ENCODE measurements at regions of chr14 and their contacts with region 1.

Region 1: GRCh38 chr14:63388763-63389431 is 70.2 kb upstream of the GPHB5 start:
- DNase-seq: peak; percentile 64
- H3K4me3 ChIP-seq: no peak overlapping the region; a peak in 1 of 4 replicates
- H3K27ac ChIP-seq: no peak overlapping the region
- H3K4me1 ChIP-seq: no peaks in the 10 kb centered on the region
- H3K27me3 ChIP-seq: no peaks in the 10 kb centered on the region
- CTCF ChIP-seq: peak; percentile 92
- EP300 ChIP-seq: no peak
- RAD21 ChIP-seq: peak; percentile 94

Region 2: GRCh38 chr14:63134801-63135200 is 254.1 kb before region 1 on chr14:
- CTCF ChIA-PET with region 1: no interaction called
- POLR2A ChIA-PET with region 1: no interaction called
- DNase-seq: peak; percentile 30
- H3K4me3 ChIP-seq: no peak overlapping the region; a peak in 1 of 4 replicates
- H3K27ac ChIP-seq: no peak overlapping the region
- H3K4me1 ChIP-seq: no peaks in the 10 kb centered on the region
- H3K27me3 ChIP-seq: no peaks in the 10 kb centered on the region; the same call in 1 of the 2 replicates
- CTCF ChIP-seq: peak; percentile 46
- EP300 ChIP-seq: no peak
- RAD21 ChIP-seq: peak; percentile 51

Region 3: DNA sequence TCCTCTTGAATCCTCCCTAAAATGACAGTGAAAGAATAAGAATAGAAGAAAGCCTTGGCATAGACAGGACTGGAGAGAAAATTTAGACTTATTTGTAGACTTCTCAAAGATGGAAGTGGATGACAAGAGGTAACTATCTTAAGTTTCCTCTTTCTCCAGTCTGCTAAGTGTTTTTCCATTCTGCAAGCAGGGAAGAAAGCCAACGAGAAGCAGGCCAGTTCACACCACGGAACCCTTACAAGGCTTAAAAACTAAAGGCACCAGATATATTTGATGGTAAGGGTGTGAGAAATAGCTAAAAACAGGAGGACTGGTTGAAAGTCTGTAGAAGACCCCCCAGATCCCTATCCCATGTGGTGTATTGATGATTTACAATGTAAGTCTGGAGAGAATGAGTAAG is 12.7 kb after region 1 on chr14:
- CTCF ChIA-PET with region 1: interaction called, 14 read pairs
- POLR2A ChIA-PET with region 1: no interaction called
- DNase-seq: no peak
- H3K4me3 ChIP-seq: no peak overlapping the region
- H3K27ac ChIP-seq: peak overlapping the region in 1 of 2 experiments; percentile 30; a peak in 1 of 4 replicates
- H3K4me1 ChIP-seq: peaks cover 0 to 2% of the 10 kb centered on the region in 2 experiments; a peak in 2 of 4 replicates
- H3K27me3 ChIP-seq: no peaks in the 10 kb centered on the region
- CTCF ChIP-seq: no peak
- EP300 ChIP-seq: no peak
- RAD21 ChIP-seq: no peak

Region 4: DNA sequence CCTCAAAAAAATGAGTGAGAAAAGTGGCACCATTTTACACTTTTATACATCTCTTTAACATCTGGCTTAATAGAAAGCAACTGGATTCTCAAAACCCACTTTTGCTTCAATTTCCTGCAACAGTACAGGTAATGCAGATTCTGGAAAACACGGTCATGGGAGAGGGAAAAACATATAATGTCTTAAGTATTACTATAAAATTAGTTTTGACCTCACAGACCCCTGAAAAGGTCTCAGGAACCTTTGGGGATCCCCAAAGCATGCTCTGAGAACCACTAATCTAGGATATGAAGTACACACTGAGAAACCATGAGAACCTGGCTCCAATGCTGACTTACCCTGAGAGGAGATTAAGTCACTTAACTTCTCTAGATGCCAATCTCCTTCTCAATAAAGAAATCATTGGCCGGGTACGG is 89.5 kb after region 1 on chr14:
- CTCF ChIA-PET with region 1: no interaction called
- POLR2A ChIA-PET with region 1: no interaction called
- DNase-seq: no peak
- H3K4me3 ChIP-seq: no peak overlapping the region
- H3K27ac ChIP-seq: no peak overlapping the region
- H3K4me1 ChIP-seq: peaks cover 7 to 14% of the 10 kb centered on the region in 2 experiments; a peak in 3 of 4 replicates
- H3K27me3 ChIP-seq: no peaks in the 10 kb centered on the region
- CTCF ChIP-seq: no peak
- EP300 ChIP-seq: no peak
- RAD21 ChIP-seq: no peak

Region 5: DNA sequence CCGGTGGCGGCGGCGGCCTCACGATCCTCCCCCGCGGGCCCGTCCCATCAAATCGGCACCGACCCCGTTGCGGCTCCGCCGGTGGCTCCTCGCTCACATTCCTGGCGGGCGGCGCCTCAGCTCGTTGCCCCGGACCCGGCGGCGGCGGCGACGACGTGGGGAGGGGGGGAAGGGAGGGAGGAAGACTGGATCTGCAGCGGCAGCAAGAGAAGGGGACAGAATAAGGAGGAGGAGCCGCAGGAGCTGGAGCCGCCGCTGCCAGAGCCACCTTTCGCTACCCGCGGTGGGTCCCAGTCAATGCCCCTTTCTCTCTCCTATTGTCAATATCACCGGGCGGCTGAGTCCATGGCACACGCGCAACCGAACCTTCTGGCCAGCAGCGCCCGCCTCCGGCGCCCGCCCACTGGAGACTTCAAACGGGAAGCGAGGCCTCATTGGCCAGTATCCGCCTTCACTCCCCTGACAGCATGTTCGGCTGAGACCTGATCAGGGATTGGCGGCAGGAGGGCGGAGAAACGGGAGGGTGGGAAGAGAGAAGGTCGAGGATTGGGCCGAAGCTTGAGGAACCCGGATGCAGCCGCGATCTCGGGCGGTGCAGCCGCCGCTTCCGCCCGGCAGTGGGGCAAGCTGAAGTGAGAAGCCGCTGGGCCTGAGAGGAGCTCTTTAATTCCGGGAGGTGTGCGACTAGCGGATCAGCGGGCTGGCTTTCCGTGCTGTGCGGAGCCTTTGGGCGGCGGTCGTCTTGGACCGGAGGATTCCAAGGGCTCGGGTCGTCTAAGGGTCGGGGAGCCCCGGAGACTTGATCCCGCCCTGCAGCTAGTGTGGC is 154.3 kb after region 1 on chr14 and contains the start of gene PPP2R5E:
- CTCF ChIA-PET with region 1: interaction called, 78 read pairs
- POLR2A ChIA-PET with region 1: interaction called, 4 read pairs
- DNase-seq: peak; percentile 96
- H3K4me3 ChIP-seq: peak within 1 kb of the TSS; percentile 89 to 93
- H3K27ac ChIP-seq: peak within 1 kb of the TSS; percentile 83 to 89
- H3K4me1 ChIP-seq: peaks cover 0 to 2% of the 10 kb centered on the region in 2 experiments; a peak in 1 of 4 replicates
- H3K27me3 ChIP-seq: no peaks in the 10 kb centered on the region
- CTCF ChIP-seq: no peak
- EP300 ChIP-seq: no peak
- RAD21 ChIP-seq: peak; percentile 8; the same call in 1 of the 2 replicates
- polyA plus RNA-seq, gene PPP2R5E: 4.0 and 4.4 TPM in 2 replicates

Region 6: GRCh38 chr14:63632932-63633514 is 244.1 kb after region 1 on chr14:
- CTCF ChIA-PET with region 1: interaction called, 17 read pairs
- POLR2A ChIA-PET with region 1: no interaction called
- DNase-seq: peak; percentile 36
- H3K4me3 ChIP-seq: no peak overlapping the region
- H3K27ac ChIP-seq: no peak overlapping the region
- H3K4me1 ChIP-seq: no peaks in the 10 kb centered on the region
- H3K27me3 ChIP-seq: no peaks in the 10 kb centered on the region
- CTCF ChIP-seq: peak; percentile 73
- EP300 ChIP-seq: no peak
- RAD21 ChIP-seq: peak; percentile 53

Region 7: GRCh38 chr14:63641473-63642228 is 252.8 kb after region 1 on chr14 and contains the start of gene WDR89:
- CTCF ChIA-PET with region 1: interaction called, 17 read pairs
- POLR2A ChIA-PET with region 1: no interaction called
- DNase-seq: peak; percentile 87
- H3K4me3 ChIP-seq: peak within 1 kb of the TSS; percentile 70 to 72
- H3K27ac ChIP-seq: peak within 1 kb of the TSS; percentile 93 to 94
- H3K4me1 ChIP-seq: no peaks in the 10 kb centered on the region; a peak in 2 of 4 replicates
- H3K27me3 ChIP-seq: no peaks in the 10 kb centered on the region
- CTCF ChIP-seq: peak; percentile 69
- EP300 ChIP-seq: no peak; a peak in 1 of 4 replicates
- RAD21 ChIP-seq: peak; percentile 49
- polyA plus RNA-seq, gene WDR89: 2.6 and 3.1 TPM in 2 replicates

Region 8: DNA sequence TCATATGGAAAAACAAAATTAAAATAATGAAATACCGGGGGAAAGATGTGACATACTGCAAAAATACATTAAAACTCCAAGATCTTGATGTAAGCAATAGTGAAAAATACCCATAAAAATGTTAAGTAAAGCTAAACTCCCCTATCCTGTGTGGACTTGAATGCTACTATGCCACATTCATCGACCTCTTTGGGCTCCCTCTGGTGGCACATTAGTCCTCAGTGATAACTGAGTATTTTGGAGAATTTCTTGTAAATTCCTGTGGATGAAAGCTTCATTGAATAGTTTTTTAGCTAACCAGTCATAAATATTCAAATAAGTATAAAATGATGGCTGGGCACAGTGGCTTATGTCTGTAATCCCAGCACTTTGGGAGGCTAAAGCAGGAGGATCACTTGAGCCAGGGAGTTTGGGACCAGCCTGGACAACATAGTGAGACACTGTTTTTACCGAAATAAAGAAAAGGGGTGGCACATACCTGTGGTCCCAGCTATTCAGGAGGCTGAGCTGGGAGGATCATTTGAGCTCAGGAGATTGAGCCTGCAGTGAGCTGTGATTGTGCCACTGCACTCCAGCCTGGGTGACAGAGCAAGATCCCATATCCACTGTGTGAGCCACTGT is 381.4 kb after region 1 on chr14:
- CTCF ChIA-PET with region 1: interaction called, 15 read pairs
- POLR2A ChIA-PET with region 1: no interaction called
- DNase-seq: peak; percentile 53
- H3K4me3 ChIP-seq: no peak overlapping the region; a peak in 1 of 4 replicates
- H3K27ac ChIP-seq: no peak overlapping the region
- H3K4me1 ChIP-seq: no peaks in the 10 kb centered on the region
- H3K27me3 ChIP-seq: no peaks in the 10 kb centered on the region
- CTCF ChIP-seq: peak; percentile 77
- EP300 ChIP-seq: no peak
- RAD21 ChIP-seq: peak; percentile 69